ENCODE measurements at regions of chr1 and their contacts with region 1.

Region 1: DNA sequence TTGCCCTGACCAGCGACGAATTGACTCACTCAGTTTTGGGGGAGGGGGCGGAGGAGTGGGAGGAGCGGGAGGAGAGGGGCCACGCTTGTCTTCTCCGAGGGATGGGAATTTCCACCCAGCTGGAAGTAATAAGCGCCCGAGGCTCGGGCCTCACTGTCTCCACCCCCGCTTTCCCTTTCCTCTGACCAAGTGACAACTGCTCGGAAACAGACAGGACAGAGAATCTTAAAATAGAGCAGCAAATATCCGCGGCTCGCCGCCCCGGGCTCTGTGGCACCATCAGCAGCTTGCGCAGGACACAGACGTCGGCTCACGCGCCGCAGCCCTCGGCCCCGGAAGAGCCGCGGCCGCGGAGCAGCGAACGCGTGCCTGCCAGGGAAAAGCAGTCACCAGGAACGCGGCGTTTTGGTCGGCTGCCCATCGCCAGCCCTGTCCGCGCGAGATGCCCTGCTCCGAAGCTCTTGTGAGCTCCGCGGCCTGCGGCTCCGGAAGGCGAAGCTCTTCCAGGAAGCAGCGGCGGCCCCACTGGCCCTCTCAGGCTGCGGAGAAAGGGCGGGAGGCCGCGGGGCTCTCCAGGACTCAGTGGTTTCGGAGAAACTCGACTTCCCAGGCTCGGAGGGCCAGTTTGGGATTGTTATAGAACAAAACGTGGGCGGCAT is 10.7 kb upstream of the RGS16 start:
- DNase-seq: peak; percentile 31
- H3K4me3 Mint-ChIP-seq: peak overlapping the region; percentile 72
- H3K27ac Mint-ChIP-seq: peak overlapping the region; percentile 86
- H3K4me1 Mint-ChIP-seq: peaks cover 64% of the 10 kb centered on the region
- H3K27me3 Mint-ChIP-seq: peaks cover 32% of the 10 kb centered on the region

Region 2: GRCh38 chr1:182629499-182630096 is 14.7 kb after region 1 on chr1:
- intact Hi-C with region 1: loop called (anchors 1 kb)
- DNase-seq: peak; percentile 16
- H3K4me3 Mint-ChIP-seq: no peak overlapping the region
- H3K27ac Mint-ChIP-seq: peak overlapping the region; percentile 56
- H3K4me1 Mint-ChIP-seq: peaks cover 61% of the 10 kb centered on the region
- H3K27me3 Mint-ChIP-seq: peaks cover 21% of the 10 kb centered on the region

Region 3: DNA sequence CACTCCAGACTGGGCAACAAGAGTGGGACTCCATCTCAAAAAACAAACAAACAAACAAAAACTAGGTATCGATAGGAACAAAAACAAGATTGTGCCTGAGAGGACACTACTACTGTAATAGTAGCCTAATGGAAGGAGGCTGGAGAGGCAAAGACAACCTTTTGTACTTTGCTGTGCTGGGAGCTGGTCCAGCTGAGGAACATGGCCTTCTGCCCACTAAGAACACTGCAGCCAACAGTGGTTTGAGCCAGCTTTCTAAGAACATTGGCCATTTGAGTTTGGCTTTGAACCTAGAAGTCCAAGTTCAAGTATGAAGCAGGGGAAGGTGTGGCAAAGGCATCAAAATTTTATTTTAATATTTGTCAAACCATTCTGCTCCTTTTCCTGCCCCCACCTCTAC is 92.2 kb after region 1 on chr1:
- intact Hi-C with region 1: loop called (anchors 1 kb)
- DNase-seq: no peak
- H3K4me3 Mint-ChIP-seq: no peak overlapping the region
- H3K27ac Mint-ChIP-seq: no peak overlapping the region
- H3K4me1 Mint-ChIP-seq: peaks cover 28% of the 10 kb centered on the region
- H3K27me3 Mint-ChIP-seq: peaks cover 4% of the 10 kb centered on the region

Region 4: GRCh38 chr1:182716740-182717720 is 102.1 kb after region 1 on chr1:
- intact Hi-C with region 1: loop called (anchors 1 kb)
- DNase-seq: no peak
- H3K4me3 Mint-ChIP-seq: no peak overlapping the region
- H3K27ac Mint-ChIP-seq: peak overlapping the region; percentile 4
- H3K4me1 Mint-ChIP-seq: peaks cover 52% of the 10 kb centered on the region
- H3K27me3 Mint-ChIP-seq: peaks cover 3% of the 10 kb centered on the region